Vagina (tissue), 2 donors: ENCODE measurements at regions of chr7 and their contacts with region 1.

Region 1: DNA sequence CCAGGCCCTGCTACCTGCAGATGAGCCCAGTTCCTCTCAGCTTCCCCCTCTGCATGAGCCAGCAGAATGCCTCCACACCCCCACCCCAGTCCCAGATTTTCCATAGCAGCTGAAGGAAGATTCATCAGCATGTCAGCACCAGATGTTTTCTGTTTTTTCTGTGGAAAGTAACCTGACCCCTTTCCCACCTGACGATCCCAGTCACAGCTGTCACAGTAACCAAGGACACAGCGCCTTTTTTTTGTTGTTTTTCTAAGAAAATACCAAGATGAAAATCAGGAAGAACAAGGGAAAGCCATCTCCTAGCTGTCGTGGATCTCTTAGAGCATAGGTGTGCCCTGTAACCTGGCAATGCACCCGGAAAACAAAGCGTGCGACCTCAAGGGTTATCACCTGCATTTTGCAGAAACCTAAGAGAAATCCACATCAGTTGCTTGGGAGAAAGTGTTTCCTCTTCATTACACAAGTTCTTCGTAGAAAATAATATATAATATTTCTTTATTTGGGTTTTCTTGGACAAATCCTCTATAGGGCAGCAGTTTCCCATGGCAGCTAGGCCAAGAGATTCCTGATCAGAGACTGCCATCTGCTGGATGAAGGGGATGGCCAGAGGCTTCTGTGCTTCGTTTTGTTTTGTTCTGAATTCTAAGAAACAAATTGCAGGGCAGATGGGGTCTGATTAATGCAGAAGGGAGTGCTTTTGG is 401.9 kb downstream of the TNS3 start:
- DNase-seq: peak in 1 of 2 donors; percentile 85
- H3K4me3 ChIP-seq: no peak overlapping the region
- H3K27ac ChIP-seq: no peak overlapping the region
- H3K4me1 ChIP-seq: no peaks in the 10 kb centered on the region
- H3K27me3 ChIP-seq: no peaks in the 10 kb centered on the region
- CTCF ChIP-seq: peak; percentile 63 to 85 (median 82)
- POLR2A ChIP-seq: no peak

Region 2: GRCh38 chr7:45917658-45918057 is 1262.3 kb before region 1 on chr7:
- intact Hi-C with region 1: loop called (anchors 10 kb)
- DNase-seq: no peak
- H3K4me3 ChIP-seq: peak overlapping the region; percentile 28 to 53
- H3K27ac ChIP-seq: peak overlapping the region; percentile 49
- H3K4me1 ChIP-seq: peaks cover 58% of the 10 kb centered on the region
- H3K27me3 ChIP-seq: no peaks in the 10 kb centered on the region
- CTCF ChIP-seq: peak; percentile 84 to 97 (median 90)
- POLR2A ChIP-seq: no peak

Region 3: GRCh38 chr7:47254081-47255006 is 74.4 kb after region 1 on chr7:
- intact Hi-C with region 1: no loop called
- DNase-seq: no peak
- H3K4me3 ChIP-seq: peak overlapping the region; percentile 45 to 52
- H3K27ac ChIP-seq: peak overlapping the region; percentile 94
- H3K4me1 ChIP-seq: peaks cover 23% of the 10 kb centered on the region
- H3K27me3 ChIP-seq: no peaks in the 10 kb centered on the region
- CTCF ChIP-seq: peak; percentile 62 to 98 (median 80)
- POLR2A ChIP-seq: no peak

Region 4: DNA sequence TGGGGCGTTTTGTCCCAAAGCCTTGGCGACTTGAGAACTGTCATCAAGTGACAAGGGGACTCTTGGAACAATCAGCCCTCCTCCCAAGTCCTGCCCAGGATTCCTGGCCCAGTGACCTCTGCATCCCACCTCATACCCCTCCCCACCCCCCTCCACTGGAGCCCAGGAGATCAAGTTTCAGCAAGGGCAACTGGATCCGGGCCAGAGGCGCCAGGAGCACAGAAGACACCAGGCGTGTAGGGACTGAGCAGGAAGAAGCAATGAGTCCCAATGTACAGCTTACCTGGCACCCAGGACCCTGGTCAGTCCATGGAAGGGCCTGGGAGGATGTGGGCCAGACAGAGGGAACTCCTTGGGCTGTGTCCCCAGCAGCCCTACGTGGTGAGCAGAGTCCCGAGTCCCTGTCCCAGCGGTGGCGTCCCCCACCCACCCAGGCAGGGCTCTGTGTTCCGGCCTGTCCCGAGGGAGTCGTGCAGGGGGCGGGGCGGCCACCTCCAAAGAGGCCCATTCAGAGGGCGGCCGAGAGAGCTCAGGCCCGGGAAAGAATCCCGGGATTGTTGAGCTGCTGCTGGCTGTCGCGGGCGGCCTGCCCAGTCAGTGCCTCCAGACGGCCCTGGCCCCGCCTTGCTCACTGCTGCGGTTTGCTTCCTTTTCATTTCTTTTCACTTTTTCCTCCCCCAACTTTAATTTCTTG is 147.9 kb after region 1 on chr7:
- intact Hi-C with region 1: no loop called
- DNase-seq: peak in 1 of 2 donors; percentile 86
- H3K4me3 ChIP-seq: peak overlapping the region; percentile 14 to 33
- H3K27ac ChIP-seq: peak overlapping the region; percentile 91
- H3K4me1 ChIP-seq: peaks cover 66% of the 10 kb centered on the region
- H3K27me3 ChIP-seq: no peaks in the 10 kb centered on the region
- CTCF ChIP-seq: no peak
- POLR2A ChIP-seq: no peak